PC-3 (cell line): ENCODE measurements at regions of chr3 and their contacts with region 1.

Region 1: DNA sequence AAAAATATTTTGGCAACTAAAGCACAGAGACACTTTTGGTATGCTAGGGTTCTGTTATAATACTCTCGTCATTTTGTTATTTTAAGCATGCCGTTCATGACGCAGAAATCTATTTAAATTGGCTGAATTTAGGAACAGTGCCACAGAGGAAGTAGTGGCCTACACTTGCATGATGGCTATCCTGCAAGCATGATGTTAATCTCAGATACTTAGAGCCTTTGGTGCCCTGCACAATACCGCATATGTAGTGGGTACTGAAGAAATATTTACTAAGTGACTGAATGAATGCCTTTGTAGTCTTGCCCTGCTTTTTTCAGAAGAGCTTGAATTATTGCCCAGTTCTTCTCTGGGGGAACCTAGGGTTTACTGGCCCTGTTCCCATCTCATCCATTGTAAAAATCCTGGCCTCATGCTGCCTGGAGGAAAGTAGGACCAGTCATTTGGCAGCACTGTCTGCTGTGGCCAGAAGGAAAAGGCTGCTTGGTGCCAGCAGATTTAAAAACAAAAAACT is 79.0 kb downstream of the SERPINI1 start:
- DNase-seq: peak; percentile 80
- ATAC-seq: peak; percentile 68
- H3K4me3 ChIP-seq: no peak overlapping the region
- H3K27ac ChIP-seq: peak overlapping the region; percentile 82
- H3K4me1 ChIP-seq: peaks cover 45% of the 10 kb centered on the region
- H3K27me3 ChIP-seq: no peaks in the 10 kb centered on the region
- CTCF ChIP-seq: no peak

Region 2: DNA sequence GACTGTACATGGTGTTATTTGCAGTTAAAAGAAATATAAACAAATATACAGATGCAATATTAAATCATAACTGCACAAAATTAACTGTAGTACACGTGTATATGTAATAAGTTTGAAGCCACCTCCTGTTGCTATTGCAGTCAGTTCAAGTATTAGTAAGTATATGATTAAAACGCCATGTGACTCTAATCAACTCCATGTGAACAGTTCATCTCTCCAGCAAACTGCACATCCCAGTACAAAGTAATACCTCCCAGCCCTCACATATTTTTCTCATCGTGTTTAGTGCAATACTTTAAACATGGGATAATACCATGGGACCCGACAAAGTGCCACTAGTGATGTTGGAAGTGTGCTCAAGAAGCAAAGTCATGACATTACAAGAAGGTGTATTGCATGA is 114.5 kb before region 1 on chr3:
- CTCF ChIA-PET with region 1: no interaction called
- POLR2A ChIA-PET with region 1: no interaction called
- intact Hi-C with region 1: no loop called
- DNase-seq: no peak
- ATAC-seq: no peak
- H3K4me3 ChIP-seq: no peak overlapping the region
- H3K27ac ChIP-seq: no peak overlapping the region
- H3K4me1 ChIP-seq: no peaks in the 10 kb centered on the region
- H3K27me3 ChIP-seq: no peaks in the 10 kb centered on the region
- CTCF ChIP-seq: no peak

Region 3: GRCh38 chr3:167734498-167735232 is 79.8 kb before region 1 on chr3 and contains the start of gene PDCD10:
- CTCF ChIA-PET with region 1: no interaction called
- POLR2A ChIA-PET with region 1: no interaction called
- intact Hi-C with region 1: loop called (anchors 1 kb)
- DNase-seq: peak; percentile 99
- ATAC-seq: peak; percentile 86
- H3K4me3 ChIP-seq: peak within 1 kb of the TSS; percentile 87
- H3K27ac ChIP-seq: peak within 1 kb of the TSS; percentile 78
- H3K4me1 ChIP-seq: peaks cover 31% of the 10 kb centered on the region
- H3K27me3 ChIP-seq: no peaks in the 10 kb centered on the region
- CTCF ChIP-seq: no peak
- total RNA-seq, gene PDCD10: 80.5 and 105 TPM in 2 replicates

Region 4: GRCh38 chr3:167829071-167829470 is 14.6 kb after region 1 on chr3:
- CTCF ChIA-PET with region 1: no interaction called
- POLR2A ChIA-PET with region 1: no interaction called
- intact Hi-C with region 1: loop called (anchors 2 kb)
- DNase-seq: no peak
- ATAC-seq: no peak
- H3K4me3 ChIP-seq: no peak overlapping the region
- H3K27ac ChIP-seq: no peak overlapping the region
- H3K4me1 ChIP-seq: no peaks in the 10 kb centered on the region
- H3K27me3 ChIP-seq: no peaks in the 10 kb centered on the region
- CTCF ChIP-seq: no peak

Region 5: GRCh38 chr3:167843886-167844285 is 29.4 kb after region 1 on chr3:
- CTCF ChIA-PET with region 1: no interaction called
- POLR2A ChIA-PET with region 1: no interaction called
- intact Hi-C with region 1: no loop called
- DNase-seq: no peak
- ATAC-seq: no peak
- H3K4me3 ChIP-seq: no peak overlapping the region
- H3K27ac ChIP-seq: no peak overlapping the region
- H3K4me1 ChIP-seq: peaks cover 6% of the 10 kb centered on the region; the same call in 1 of the 2 replicates
- H3K27me3 ChIP-seq: no peaks in the 10 kb centered on the region
- CTCF ChIP-seq: no peak